Activated B cell treated with CpG ODN at 0.5 μM for 24 hours (primary cell): ENCODE measurements at regions of chr2 and their contacts with region 1.

Region 1: GRCh38 chr2:55636831-55637230 is 19.4 kb upstream of the PPP4R3B start:
- DNase-seq: no peak
- ATAC-seq: no peak
- H3K4me3 Mint-ChIP-seq: no peak overlapping the region
- H3K27ac Mint-ChIP-seq: no peak overlapping the region
- H3K4me1 Mint-ChIP-seq: no peaks in the 10 kb centered on the region
- H3K27me3 Mint-ChIP-seq: no peaks in the 10 kb centered on the region
- CTCF ChIP-seq: no peak

Region 2: DNA sequence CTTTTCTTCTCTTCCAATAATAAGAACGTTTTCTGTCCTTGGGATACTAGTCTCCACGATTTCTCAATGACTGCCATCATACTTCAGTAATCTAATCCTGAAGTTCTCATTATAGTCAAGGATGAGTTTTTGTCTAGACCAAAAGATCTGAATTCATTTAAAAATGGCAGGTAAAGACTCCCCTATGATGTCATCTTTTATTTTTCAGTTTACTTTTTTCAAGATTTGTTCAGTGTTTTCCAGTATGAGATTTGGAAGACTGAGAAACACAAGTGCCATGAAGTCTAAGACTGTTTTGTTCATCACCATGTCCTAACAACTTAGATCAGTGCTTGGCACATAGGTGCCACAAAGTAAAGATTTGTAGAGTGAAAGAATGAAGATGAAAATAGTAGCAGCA is 16.4 kb after region 1 on chr2:
- CTCF ChIA-PET with region 1: no interaction called
- POLR2A ChIA-PET with region 1: interaction called, 4 read pairs
- intact Hi-C with region 1: loop called (anchors 2 kb)
- DNase-seq: no peak
- ATAC-seq: no peak
- H3K4me3 Mint-ChIP-seq: no peak overlapping the region
- H3K27ac Mint-ChIP-seq: no peak overlapping the region
- H3K4me1 Mint-ChIP-seq: no peaks in the 10 kb centered on the region
- H3K27me3 Mint-ChIP-seq: no peaks in the 10 kb centered on the region
- CTCF ChIP-seq: no peak

Region 3: DNA sequence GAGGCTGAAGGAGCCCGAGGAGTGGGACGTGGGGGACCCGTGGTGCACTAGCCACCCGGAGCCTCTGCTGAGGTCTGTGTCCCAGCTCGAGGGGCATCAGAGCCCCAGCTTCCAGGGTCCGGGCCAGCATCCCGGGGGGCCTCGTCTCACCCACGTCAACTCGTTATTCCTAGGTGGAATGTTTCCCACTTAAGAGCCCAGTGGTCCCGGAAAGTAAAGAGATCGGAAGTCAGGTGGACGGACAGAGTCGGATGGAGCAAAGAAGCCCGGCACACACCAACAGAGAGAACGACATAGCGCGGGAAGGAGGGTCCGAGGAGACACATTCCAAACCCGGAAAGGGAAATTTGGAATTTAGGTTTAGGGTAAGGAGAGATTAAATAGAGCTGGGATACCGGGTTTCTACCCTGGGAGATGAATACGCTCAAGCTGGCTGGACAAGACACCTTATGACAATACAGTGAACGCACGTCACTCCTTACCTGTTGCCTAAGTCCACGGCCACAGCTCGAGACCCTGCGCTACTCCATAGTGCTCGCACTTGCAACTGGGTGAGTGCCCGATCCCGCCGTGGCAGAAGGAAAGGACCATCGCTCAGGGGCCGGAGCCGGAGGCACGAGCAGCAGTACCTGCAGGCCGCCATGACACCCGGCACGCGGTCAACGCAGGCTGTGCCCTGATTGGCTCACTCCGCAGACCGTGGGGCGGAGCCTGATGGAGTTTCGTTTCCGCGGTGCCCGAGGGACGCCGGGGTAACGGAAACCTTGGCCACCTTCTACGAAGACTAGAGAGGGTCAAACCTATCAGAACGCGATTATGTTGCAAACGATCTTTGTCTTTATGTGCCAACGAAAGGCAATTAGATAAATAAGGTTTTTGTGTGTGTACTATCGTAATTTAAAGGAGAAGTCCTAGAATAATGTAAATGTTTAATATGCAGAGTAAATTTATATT is 56.6 kb after region 1 on chr2 and contains the start of gene PNPT1:
- CTCF ChIA-PET with region 1: no interaction called
- POLR2A ChIA-PET with region 1: no interaction called
- intact Hi-C with region 1: loop called (anchors 5 kb)
- DNase-seq: peak; percentile 87
- ATAC-seq: peak; percentile 100
- H3K4me3 Mint-ChIP-seq: peak within 1 kb of the TSS; percentile 96
- H3K27ac Mint-ChIP-seq: peak within 1 kb of the TSS; percentile 79
- H3K4me1 Mint-ChIP-seq: peaks cover 30% of the 10 kb centered on the region
- H3K27me3 Mint-ChIP-seq: no peaks in the 10 kb centered on the region
- CTCF ChIP-seq: no peak
- total RNA-seq, gene PNPT1: 26.6 and 35.8 TPM in 2 replicates